Activated CD4-positive, alpha-beta T cell treated with anti-CD3 and anti-CD28 coated beads for 36 hours (primary cell): ENCODE measurements at regions of chr4 and their contacts with region 1.

Region 1: GRCh38 chr4:113394730-113395530 is 345.5 kb downstream of the ANK2 start:
- DNase-seq: peak; percentile 64
- ATAC-seq: peak; percentile 97
- H3K4me3 Mint-ChIP-seq: no peak overlapping the region
- H3K27ac Mint-ChIP-seq: no peak overlapping the region
- H3K4me1 Mint-ChIP-seq: peaks cover 8% of the 10 kb centered on the region
- H3K27me3 Mint-ChIP-seq: peaks cover 2% of the 10 kb centered on the region

Region 2: DNA sequence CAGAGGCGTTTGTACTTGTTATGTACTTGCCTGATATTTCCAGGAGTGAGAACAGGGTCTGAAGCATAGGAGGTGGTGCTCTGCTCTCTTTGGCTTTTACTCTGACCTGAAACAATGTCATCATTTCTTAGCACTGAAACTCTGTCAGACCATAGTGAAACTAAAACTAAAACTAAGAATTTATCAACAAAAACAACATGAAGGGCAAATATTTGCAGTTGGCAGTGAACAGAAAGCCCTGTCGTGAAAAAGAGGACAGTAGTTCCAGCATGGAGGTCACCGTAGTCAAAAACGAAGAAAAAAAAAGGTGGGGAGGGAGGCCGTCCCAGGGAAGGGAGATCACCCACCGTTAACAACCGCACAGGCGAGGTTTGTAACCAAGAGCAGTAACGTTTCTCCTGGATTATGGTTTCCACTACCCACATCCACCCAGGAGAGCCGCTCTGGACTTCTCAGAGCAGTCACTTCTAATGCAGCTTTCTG is 248.0 kb before region 1 on chr4:
- CTCF ChIA-PET with region 1: no interaction called
- POLR2A ChIA-PET with region 1: no interaction called
- intact Hi-C with region 1: no loop called
- DNase-seq: no peak
- ATAC-seq: peak; percentile 68
- H3K4me3 Mint-ChIP-seq: peak overlapping the region; percentile 55
- H3K27ac Mint-ChIP-seq: peak overlapping the region; percentile 53
- H3K4me1 Mint-ChIP-seq: peaks cover 3% of the 10 kb centered on the region
- H3K27me3 Mint-ChIP-seq: peaks cover 8% of the 10 kb centered on the region

Region 3: GRCh38 chr4:113411496-113411938 is 16.6 kb after region 1 on chr4:
- CTCF ChIA-PET with region 1: interaction called, 10 read pairs
- POLR2A ChIA-PET with region 1: no interaction called
- intact Hi-C with region 1: no loop called
- DNase-seq: no peak
- ATAC-seq: no peak
- H3K4me3 Mint-ChIP-seq: no peak overlapping the region
- H3K27ac Mint-ChIP-seq: no peak overlapping the region
- H3K4me1 Mint-ChIP-seq: peaks cover 6% of the 10 kb centered on the region
- H3K27me3 Mint-ChIP-seq: peaks cover 2% of the 10 kb centered on the region

Region 4: GRCh38 chr4:113684534-113685091 is 289.7 kb after region 1 on chr4:
- CTCF ChIA-PET with region 1: no interaction called
- POLR2A ChIA-PET with region 1: no interaction called
- intact Hi-C with region 1: loop called in 1 of 2 experiments (anchors 10 kb)
- DNase-seq: peak; percentile 67
- ATAC-seq: peak; percentile 83
- H3K4me3 Mint-ChIP-seq: peak overlapping the region; percentile 32
- H3K27ac Mint-ChIP-seq: peak overlapping the region; percentile 95
- H3K4me1 Mint-ChIP-seq: peaks cover 84% of the 10 kb centered on the region
- H3K27me3 Mint-ChIP-seq: no peaks in the 10 kb centered on the region

Region 5: GRCh38 chr4:113738251-113738650 is 343.3 kb after region 1 on chr4:
- CTCF ChIA-PET with region 1: no interaction called
- POLR2A ChIA-PET with region 1: no interaction called
- intact Hi-C with region 1: no loop called
- DNase-seq: no peak
- ATAC-seq: no peak
- H3K4me3 Mint-ChIP-seq: no peak overlapping the region
- H3K27ac Mint-ChIP-seq: no peak overlapping the region
- H3K4me1 Mint-ChIP-seq: peaks cover 58% of the 10 kb centered on the region
- H3K27me3 Mint-ChIP-seq: no peaks in the 10 kb centered on the region

Region 6: DNA sequence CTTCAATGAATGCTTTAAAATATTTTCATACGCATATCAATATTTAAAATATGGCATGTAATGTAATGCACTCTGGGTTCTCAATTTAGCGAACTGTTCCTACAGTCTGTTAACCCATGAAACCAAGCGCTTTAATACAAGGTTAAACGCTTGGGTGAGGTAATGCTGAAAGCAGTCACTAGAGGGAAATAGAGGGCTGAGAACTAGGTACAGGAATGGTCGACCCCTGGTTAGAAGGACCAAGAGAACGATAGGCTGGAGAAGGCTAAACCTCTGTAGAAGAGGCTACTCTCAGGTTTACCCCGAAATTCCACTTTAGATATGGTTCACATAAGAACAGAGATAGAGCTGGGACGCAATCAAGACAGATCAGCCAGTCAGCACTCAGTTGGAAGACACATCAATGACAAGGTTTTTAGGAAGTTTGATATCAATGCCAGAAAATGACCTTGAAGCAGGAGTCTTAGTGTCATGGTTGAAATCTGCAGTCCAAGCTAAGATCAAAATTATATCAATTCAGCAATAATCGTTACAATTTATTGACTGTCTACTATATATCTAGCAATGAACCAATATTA is 557.6 kb after region 1 on chr4:
- CTCF ChIA-PET with region 1: no interaction called
- POLR2A ChIA-PET with region 1: no interaction called
- intact Hi-C with region 1: loop called in 1 of 2 experiments (anchors 2 kb)
- DNase-seq: peak; percentile 30
- ATAC-seq: peak; percentile 83
- H3K4me3 Mint-ChIP-seq: no peak overlapping the region
- H3K27ac Mint-ChIP-seq: no peak overlapping the region
- H3K4me1 Mint-ChIP-seq: peaks cover 4% of the 10 kb centered on the region
- H3K27me3 Mint-ChIP-seq: peaks cover 8% of the 10 kb centered on the region

Region 7: GRCh38 chr4:114659386-114660008 is 1264.6 kb after region 1 on chr4:
- CTCF ChIA-PET with region 1: interaction called, 3 read pairs
- POLR2A ChIA-PET with region 1: no interaction called
- intact Hi-C with region 1: loop called in 1 of 2 experiments (anchors 5 kb)
- DNase-seq: peak; percentile 59
- ATAC-seq: peak; percentile 66
- H3K4me3 Mint-ChIP-seq: no peak overlapping the region
- H3K27ac Mint-ChIP-seq: no peak overlapping the region
- H3K4me1 Mint-ChIP-seq: no peaks in the 10 kb centered on the region
- H3K27me3 Mint-ChIP-seq: peaks cover 10% of the 10 kb centered on the region